Caco-2 (cell line): ENCODE measurements at regions of chr13 and their contacts with region 1.

Region 1: DNA sequence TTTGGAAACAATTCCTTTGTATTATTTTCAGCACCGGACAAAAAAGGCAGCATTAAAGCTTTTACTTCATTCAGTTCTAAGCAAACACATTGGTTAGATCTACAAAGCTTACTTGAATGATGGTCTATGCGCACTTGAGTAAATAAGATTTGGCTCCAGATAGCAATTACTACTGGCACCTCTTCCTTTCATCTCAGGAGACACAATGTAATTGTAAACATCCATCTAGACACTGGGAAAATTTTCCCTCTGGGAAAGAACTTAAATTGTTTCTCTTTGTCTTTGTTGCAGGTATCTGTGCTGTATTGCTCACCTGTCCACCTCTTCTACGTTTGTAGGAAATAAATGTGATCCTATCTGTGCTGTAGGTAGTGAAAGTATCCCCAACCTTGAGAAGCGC is 148.1 kb downstream of the STOML3 start:
- DNase-seq: no peak
- H3K4me3 ChIP-seq: no peak overlapping the region
- H3K4me3 Mint-ChIP-seq: no peak overlapping the region
- H3K27ac Mint-ChIP-seq: peak overlapping the region; percentile 31
- H3K4me1 ChIP-seq: peaks cover 41% of the 10 kb centered on the region
- H3K4me1 Mint-ChIP-seq: peaks cover 22% of the 10 kb centered on the region
- H3K27me3 ChIP-seq: no peaks in the 10 kb centered on the region
- H3K27me3 Mint-ChIP-seq: no peaks in the 10 kb centered on the region
- CTCF ChIP-seq: no peak

Region 2: GRCh38 chr13:38784037-38784880 is 58.3 kb before region 1 on chr13:
- CTCF ChIA-PET with region 1: no interaction called
- POLR2A ChIA-PET with region 1: no interaction called
- intact Hi-C with region 1: loop called (anchors 5 kb)
- DNase-seq: no peak
- H3K4me3 ChIP-seq: no peak overlapping the region
- H3K4me3 Mint-ChIP-seq: peak overlapping the region; percentile 7
- H3K27ac Mint-ChIP-seq: no peak overlapping the region
- H3K4me1 ChIP-seq: peaks cover 19% of the 10 kb centered on the region
- H3K4me1 Mint-ChIP-seq: peaks cover 33% of the 10 kb centered on the region
- H3K27me3 ChIP-seq: no peaks in the 10 kb centered on the region
- H3K27me3 Mint-ChIP-seq: no peaks in the 10 kb centered on the region
- CTCF ChIP-seq: no peak